Naive thymus-derived CD4-positive, alpha-beta T cell (primary cell): ENCODE measurements at regions of chr1 and their contacts with region 1.

Region 1: DNA sequence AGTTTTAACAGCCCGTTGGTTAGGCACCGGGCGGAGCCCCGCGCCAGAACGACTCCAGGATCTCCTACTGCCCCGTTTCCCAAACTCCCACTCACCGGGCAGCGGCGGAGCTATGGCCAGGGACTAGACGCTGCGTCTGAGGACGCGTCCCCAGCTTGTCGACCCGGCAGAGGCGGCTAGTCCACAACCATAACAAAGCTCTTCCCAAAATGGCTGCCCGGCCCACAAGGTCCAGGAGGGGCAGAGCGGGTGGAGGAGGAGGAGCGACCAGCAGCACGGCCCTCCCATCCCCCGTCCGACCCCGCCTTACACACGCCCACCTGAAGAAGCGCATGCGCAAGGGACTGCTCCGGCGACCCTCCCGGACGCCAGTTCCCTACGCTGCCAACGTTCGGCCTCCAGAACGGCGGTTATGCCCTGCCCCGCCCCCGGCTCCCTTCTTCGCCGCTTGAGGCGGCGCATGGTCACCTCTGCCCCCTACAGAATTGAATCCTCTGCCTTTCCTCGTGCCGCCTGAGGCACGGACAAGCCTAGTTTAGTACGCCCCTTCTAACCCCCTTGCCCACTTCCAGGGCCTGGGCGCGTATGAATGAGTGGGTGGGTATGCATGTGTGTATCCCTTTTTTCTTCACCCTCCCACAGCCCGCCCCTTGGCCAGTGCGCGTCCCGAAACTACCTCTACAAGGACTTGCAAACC is at the start of gene GPBP1L1:
- DNase-seq: peak; percentile 94 to 98 (median 97)
- ATAC-seq: peak; percentile 85
- H3K4me3 ChIP-seq: peak within 1 kb of the TSS; percentile 86
- H3K4me3 Mint-ChIP-seq: peak within 1 kb of the TSS; percentile 95 to 100 (median 99)
- H3K27ac ChIP-seq: peak within 1 kb of the TSS; percentile 94
- H3K27ac Mint-ChIP-seq: peak within 1 kb of the TSS; percentile 99 to 100 (median 100)
- H3K4me1 ChIP-seq: peaks cover 29 to 35% of the 10 kb centered on the region in 2 donors
- H3K4me1 Mint-ChIP-seq: peaks cover 21 to 66% (median 50%) of the 10 kb centered on the region in 7 donors
- H3K27me3 ChIP-seq: no peaks in the 10 kb centered on the region
- H3K27me3 Mint-ChIP-seq: no peaks in the 10 kb centered on the region
- total RNA-seq, gene GPBP1L1: 110 to 180 (median 122) TPM

Region 2: GRCh38 chr1:43974443-43975248 is 1711.8 kb before region 1 on chr1 and contains the start of gene ATP6V0B:
- CTCF ChIA-PET with region 1: no interaction called
- POLR2A ChIA-PET with region 1: no interaction called
- intact Hi-C with region 1: loop called in 1 of 2 experiments (anchors 10 kb)
- DNase-seq: peak; percentile 83 to 98 (median 90)
- ATAC-seq: peak; percentile 85
- H3K4me3 ChIP-seq: peak within 1 kb of the TSS; percentile 93
- H3K4me3 Mint-ChIP-seq: peak within 1 kb of the TSS; percentile 88 to 98 (median 94)
- H3K27ac ChIP-seq: peak within 1 kb of the TSS; percentile 91
- H3K27ac Mint-ChIP-seq: peak within 1 kb of the TSS; percentile 90 to 99 (median 94)
- H3K4me1 ChIP-seq: peaks cover 27 to 29% of the 10 kb centered on the region in 2 donors
- H3K4me1 Mint-ChIP-seq: peaks cover 51 to 69% (median 58%) of the 10 kb centered on the region in 7 donors
- H3K27me3 ChIP-seq: no peaks in the 10 kb centered on the region
- H3K27me3 Mint-ChIP-seq: peaks cover 0 to 5% (median 0%) of the 10 kb centered on the region in 5 donors
- total RNA-seq, gene ATP6V0B: 47.3 to 152 (median 69.3) TPM

Region 3: DNA sequence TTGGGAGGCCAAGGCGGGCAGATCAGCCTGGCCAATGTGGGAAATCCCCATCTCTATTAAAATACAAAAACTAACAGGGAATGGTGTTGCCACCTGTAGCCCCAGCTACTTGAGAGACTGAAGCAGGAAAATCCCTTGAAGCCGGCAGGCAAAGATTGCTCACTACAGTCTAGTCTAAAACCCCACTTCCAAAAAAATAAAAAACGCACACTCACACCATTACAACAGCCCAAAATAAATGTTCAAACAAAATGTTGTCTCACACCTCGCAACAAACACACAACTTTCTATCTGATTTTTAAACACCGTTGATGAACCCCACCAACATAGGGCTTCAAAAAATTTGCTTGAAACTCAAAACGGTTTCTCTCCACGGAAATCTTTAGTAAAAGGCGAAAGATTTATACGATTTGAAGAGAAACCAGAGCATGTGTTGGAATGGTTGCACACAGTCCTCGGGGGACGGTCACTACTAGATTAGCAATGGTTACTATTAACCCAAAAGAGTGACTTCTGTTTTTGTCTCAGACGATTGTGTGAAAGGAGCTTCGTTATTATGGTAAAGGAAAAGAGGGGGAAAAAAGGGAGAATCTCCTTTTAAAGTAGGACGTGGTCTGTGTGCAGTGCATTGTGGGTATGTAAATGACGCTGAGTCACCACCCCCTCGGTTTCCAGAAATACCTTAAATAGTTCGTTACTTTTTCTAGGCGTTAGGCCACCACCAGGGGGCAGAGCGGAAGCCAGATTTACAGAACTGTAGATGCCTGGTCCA is 955.5 kb before region 1 on chr1 and contains the start of gene RNU5D-1:
- CTCF ChIA-PET with region 1: no interaction called
- POLR2A ChIA-PET with region 1: no interaction called
- intact Hi-C with region 1: loop called (anchors 2 to 5 kb)
- DNase-seq: peak; percentile 77 to 92 (median 89)
- ATAC-seq: peak; percentile 85
- H3K4me3 ChIP-seq: peak within 1 kb of the TSS; percentile 18
- H3K4me3 Mint-ChIP-seq: peak within 1 kb of the TSS; percentile 54 to 93 (median 84)
- H3K27ac ChIP-seq: peak within 1 kb of the TSS; percentile 86
- H3K27ac Mint-ChIP-seq: peak within 1 kb of the TSS; percentile 97 to 100 (median 98)
- H3K4me1 ChIP-seq: peaks cover 10 to 13% of the 10 kb centered on the region in 2 donors
- H3K4me1 Mint-ChIP-seq: peaks cover 14 to 58% (median 43%) of the 10 kb centered on the region in 7 donors
- H3K27me3 ChIP-seq: no peaks in the 10 kb centered on the region
- H3K27me3 Mint-ChIP-seq: no peaks in the 10 kb centered on the region
- total RNA-seq, gene RNU5D-1: not detected

Region 4: GRCh38 chr1:45011837-45012638 is 674.4 kb before region 1 on chr1 and contains the start of gene UROD:
- CTCF ChIA-PET with region 1: no interaction called
- POLR2A ChIA-PET with region 1: no interaction called
- intact Hi-C with region 1: loop called in 1 of 2 experiments (anchors 1 kb)
- DNase-seq: peak; percentile 61 to 94 (median 89)
- ATAC-seq: peak; percentile 93
- H3K4me3 ChIP-seq: peak within 1 kb of the TSS; percentile 65
- H3K4me3 Mint-ChIP-seq: peak within 1 kb of the TSS; percentile 90 to 100 (median 93)
- H3K27ac ChIP-seq: peak within 1 kb of the TSS; percentile 81
- H3K27ac Mint-ChIP-seq: peak within 1 kb of the TSS; percentile 89 to 98 (median 94)
- H3K4me1 ChIP-seq: peaks cover 28 to 30% of the 10 kb centered on the region in 2 donors
- H3K4me1 Mint-ChIP-seq: peaks cover 29 to 64% (median 57%) of the 10 kb centered on the region in 7 donors
- H3K27me3 ChIP-seq: no peaks in the 10 kb centered on the region
- H3K27me3 Mint-ChIP-seq: no peaks in the 10 kb centered on the region
- total RNA-seq, gene UROD: 40.7 to 72.8 (median 58.1) TPM

Region 5: DNA sequence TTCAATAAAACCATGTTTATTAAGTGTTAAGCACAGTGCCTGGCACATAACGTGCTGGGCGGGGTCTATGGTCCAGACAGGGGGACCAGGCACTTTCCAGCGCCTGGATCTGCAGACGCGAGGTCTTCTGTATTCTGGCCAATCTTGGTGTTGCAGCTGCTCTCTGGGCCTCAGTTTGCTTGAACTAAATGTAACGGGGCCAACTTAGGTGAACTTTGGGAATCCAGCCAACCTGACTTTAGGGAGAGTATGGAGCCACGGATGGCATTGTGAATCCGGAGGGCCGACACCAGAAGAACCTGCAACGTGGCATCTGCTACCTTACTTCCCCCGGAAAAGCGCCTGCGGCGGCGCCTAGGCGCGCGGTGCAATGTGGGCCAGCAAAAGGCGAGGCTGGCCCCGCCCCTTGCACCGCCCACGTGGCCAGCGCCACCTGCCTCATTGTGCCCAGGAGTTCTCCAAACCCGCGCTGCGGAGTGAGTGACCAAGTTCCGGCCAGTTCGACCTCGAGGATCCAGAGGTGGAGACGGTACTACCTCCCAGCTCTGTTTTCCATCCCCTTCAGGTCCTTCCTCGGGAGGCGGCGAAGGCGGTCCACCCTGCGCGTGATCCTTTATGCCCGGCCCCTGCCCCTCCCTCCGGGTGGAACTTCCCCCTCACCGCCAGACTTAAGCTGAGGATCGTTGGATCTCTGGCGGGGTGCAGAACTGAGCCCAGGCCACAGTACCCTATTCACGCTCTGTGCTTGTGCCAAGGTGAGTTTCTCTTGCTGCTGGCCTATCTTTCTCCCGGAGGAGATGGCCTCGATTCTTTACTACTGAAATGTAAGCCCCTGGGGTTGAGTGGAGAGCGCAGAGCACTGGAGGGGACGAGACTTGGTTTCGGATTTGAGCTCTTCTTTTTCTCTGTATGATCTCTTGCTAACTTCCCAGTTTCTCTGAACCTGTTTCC is 135.8 kb before region 1 on chr1 and contains the start of gene AKR1A1:
- CTCF ChIA-PET with region 1: interaction called, 4 read pairs
- POLR2A ChIA-PET with region 1: interaction called, 3 read pairs
- intact Hi-C with region 1: loop called in 1 of 2 experiments (anchors 1 kb)
- DNase-seq: peak; percentile 79 to 91 (median 88)
- ATAC-seq: peak; percentile 98
- H3K4me3 ChIP-seq: peak within 1 kb of the TSS; percentile 93
- H3K4me3 Mint-ChIP-seq: peak within 1 kb of the TSS; percentile 89 to 99 (median 96)
- H3K27ac ChIP-seq: peak within 1 kb of the TSS; percentile 89
- H3K27ac Mint-ChIP-seq: peak within 1 kb of the TSS; percentile 83 to 98 (median 96)
- H3K4me1 ChIP-seq: peaks cover 12 to 22% of the 10 kb centered on the region in 2 donors
- H3K4me1 Mint-ChIP-seq: peaks cover 18 to 28% (median 22%) of the 10 kb centered on the region in 7 donors
- H3K27me3 ChIP-seq: no peaks in the 10 kb centered on the region
- H3K27me3 Mint-ChIP-seq: no peaks in the 10 kb centered on the region
- total RNA-seq, gene AKR1A1: 47.5 to 155 (median 69.3) TPM

Region 6: DNA sequence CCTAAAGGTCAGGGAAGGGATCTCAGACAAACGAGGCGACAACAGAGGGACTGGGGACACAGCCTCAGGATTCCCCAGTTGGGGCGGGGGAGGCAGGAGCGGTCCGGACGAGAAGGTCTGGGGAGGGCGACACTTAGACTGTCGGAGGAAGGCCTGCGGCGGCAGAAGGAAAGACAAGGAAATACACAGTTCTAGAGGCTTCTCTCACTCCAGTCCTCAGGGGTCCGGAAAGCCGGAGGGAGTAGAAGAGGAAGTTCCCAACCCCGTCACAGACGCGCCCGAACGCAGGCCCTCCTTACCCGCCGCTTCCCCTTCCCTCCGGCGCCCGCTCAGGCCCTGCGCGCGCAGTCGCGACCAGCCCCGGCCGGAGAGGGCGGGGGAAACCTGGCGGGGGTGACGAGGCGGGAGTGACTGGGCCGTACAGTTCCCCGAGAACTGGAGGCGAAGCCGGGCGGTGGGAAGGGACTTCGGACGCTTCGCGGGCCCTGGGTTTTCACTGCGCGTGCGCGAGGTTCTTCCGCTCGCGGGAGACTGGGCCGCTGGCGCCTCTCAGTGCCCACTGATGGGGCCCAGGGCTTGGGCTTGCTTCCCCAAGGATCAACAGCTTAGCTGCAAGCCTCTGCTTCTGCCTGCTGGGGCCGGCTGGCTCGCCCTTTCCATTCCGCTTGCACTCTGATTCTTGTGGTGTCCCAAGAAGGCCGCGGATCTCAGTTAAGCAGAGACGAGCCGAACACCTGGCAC is 64.0 kb after region 1 on chr1 and contains the start of gene IPP:
- CTCF ChIA-PET with region 1: interaction called, 3 read pairs
- POLR2A ChIA-PET with region 1: interaction called, 4 read pairs
- intact Hi-C with region 1: loop called (anchors 1 kb)
- DNase-seq: peak; percentile 81 to 96 (median 88)
- ATAC-seq: peak; percentile 94
- H3K4me3 ChIP-seq: peak within 1 kb of the TSS; percentile 81
- H3K4me3 Mint-ChIP-seq: peak within 1 kb of the TSS; percentile 90 to 98 (median 96)
- H3K27ac ChIP-seq: peak within 1 kb of the TSS; percentile 97
- H3K27ac Mint-ChIP-seq: peak within 1 kb of the TSS; percentile 95 to 100 (median 99)
- H3K4me1 ChIP-seq: peaks cover 0 to 12% of the 10 kb centered on the region in 2 donors
- H3K4me1 Mint-ChIP-seq: peaks cover 7 to 50% (median 37%) of the 10 kb centered on the region in 7 donors
- H3K27me3 ChIP-seq: no peaks in the 10 kb centered on the region
- H3K27me3 Mint-ChIP-seq: peaks cover 0 to 2% (median 0%) of the 10 kb centered on the region in 5 donors
- total RNA-seq, gene IPP: 9.1 to 19.8 (median 12.5) TPM

Region 7: DNA sequence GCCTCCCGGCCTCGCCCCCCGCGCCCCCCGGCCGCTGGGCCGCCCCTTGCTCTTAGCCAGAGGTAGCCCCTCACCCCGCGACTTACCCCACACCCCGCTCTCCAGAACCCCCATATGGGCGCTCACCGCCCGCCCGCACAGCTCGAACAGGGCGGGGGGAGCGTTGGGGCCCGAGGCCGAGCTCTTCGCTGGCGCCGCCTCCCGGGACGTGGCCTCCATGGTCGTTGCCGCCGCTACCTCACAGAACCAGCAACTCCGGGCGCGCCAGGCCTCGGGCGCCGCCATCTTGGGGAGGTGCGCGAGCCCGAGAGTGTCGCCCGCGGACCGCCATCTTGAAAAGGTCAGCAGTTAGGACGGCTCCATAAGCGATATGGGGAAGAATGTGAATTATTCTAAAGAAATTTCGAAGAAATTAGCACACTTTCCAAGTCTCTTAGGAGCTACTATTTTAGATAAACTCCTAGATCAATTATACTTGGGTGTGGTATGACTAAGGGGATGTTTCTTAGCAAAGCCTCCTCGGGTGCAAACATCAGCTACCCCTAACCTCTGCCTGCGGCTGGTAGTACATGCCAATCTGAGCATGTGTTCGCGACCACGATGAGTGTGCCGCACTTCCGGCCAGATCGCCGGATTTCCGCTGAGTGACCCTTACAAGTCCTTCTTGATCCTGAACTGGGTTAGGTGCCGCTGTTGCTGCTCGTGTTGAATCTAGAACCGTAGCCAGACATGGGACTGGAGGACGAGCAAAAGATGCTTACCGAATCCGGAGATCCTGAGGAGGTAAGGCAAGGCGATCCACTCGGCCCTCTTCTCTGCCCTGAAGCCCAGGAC is 616.8 kb after region 1 on chr1 and contains the starts of genes LRRC41 and UQCRH:
- CTCF ChIA-PET with region 1: no interaction called
- POLR2A ChIA-PET with region 1: interaction called, 3 read pairs
- intact Hi-C with region 1: loop called (anchors 1 to 2 kb)
- DNase-seq: peak; percentile 91 to 96 (median 94)
- ATAC-seq: peak; percentile 94
- H3K4me3 ChIP-seq: peak within 1 kb of the TSS; percentile 83
- H3K4me3 Mint-ChIP-seq: peak within 1 kb of the TSS; percentile 94 to 99 (median 98)
- H3K27ac ChIP-seq: peak within 1 kb of the TSS; percentile 98
- H3K27ac Mint-ChIP-seq: peak within 1 kb of the TSS; percentile 95 to 99 (median 97)
- H3K4me1 ChIP-seq: peaks cover 19 to 37% of the 10 kb centered on the region in 2 donors
- H3K4me1 Mint-ChIP-seq: peaks cover 31 to 65% (median 46%) of the 10 kb centered on the region in 7 donors
- H3K27me3 ChIP-seq: no peaks in the 10 kb centered on the region
- H3K27me3 Mint-ChIP-seq: peaks cover 0 to 2% (median 0%) of the 10 kb centered on the region in 5 donors
- total RNA-seq, gene LRRC41: 34.4 to 50.5 (median 37.2) TPM
- total RNA-seq, gene UQCRH: 107 to 260 (median 127) TPM